Sigmoid colon (tissue), 7 donors: ENCODE measurements at regions of chr11 and their contacts with region 1.

Region 1: GRCh38 chr11:76235233-76236091 is 29.2 kb upstream of the WNT11 start:
- DNase-seq: peak; percentile 95
- H3K4me3 ChIP-seq: peak overlapping the region; percentile 48 to 83 (median 74)
- H3K27ac ChIP-seq: peak overlapping the region; percentile 83 to 90 (median 89)
- H3K4me1 ChIP-seq: peaks cover 0 to 23% (median 17%) of the 10 kb centered on the region in 4 donors
- H3K27me3 ChIP-seq: no peaks in the 10 kb centered on the region
- CTCF ChIP-seq: no peak
- EP300 ChIP-seq: no peak
- POLR2A ChIP-seq: peak in 1 of 2 donors; percentile 33

Region 2: GRCh38 chr11:75826461-75827230 is 408.8 kb before region 1 on chr11:
- intact Hi-C with region 1: loop called (anchors 5 kb)
- DNase-seq: no peak
- H3K4me3 ChIP-seq: no peak overlapping the region
- H3K27ac ChIP-seq: peak overlapping the region; percentile 78 to 92 (median 86)
- H3K4me1 ChIP-seq: peaks cover 0 to 94% (median 70%) of the 10 kb centered on the region in 4 donors
- H3K27me3 ChIP-seq: no peaks in the 10 kb centered on the region
- CTCF ChIP-seq: no peak
- EP300 ChIP-seq: no peak
- POLR2A ChIP-seq: no peak

Region 3: DNA sequence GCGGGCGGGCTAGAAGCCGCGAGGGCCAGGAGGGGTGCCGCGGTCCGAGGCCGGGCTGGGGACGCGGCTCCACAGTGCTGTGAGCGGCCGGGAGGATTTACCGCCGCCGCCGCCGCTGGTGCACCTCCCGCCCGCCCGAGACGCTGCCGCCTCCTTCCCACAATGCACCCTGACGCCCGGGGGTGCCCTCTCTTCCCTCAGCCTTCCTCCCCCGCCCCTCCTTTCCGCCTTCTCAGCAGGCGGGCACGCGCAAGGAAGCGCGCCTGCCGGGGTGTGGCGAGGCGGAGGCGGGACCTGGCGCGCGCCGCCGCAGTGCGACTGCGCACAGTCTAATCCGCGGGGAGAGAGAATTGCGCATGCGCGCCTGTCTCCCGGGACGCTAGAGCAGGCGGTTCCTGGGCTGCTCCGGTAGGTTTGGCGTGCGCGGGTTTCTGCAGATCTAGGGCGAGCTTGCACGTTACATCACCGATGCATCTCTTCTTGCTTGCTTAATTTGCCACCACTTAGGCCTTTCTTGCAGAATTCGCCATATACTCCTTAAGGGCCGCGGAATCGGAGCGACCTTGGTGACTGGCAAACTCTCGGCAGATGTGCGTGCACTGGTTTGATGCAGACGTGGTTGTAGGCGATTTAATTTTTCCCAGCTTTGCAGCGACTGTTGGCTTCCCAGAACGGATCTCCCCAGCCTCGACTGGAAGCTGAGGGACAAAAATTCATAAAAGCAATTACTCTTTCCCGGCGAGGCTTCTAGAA is 145.7 kb after region 1 on chr11 and contains the starts of genes GVQW3 and THAP12:
- intact Hi-C with region 1: loop called (anchors 2 kb)
- DNase-seq: peak; percentile 99
- H3K4me3 ChIP-seq: peak within 1 kb of the TSS; percentile 69 to 92 (median 86)
- H3K27ac ChIP-seq: peak within 1 kb of the TSS; percentile 82 to 86 (median 86)
- H3K4me1 ChIP-seq: peaks cover 0 to 43% (median 28%) of the 10 kb centered on the region in 4 donors
- H3K27me3 ChIP-seq: no peaks in the 10 kb centered on the region
- CTCF ChIP-seq: no peak
- EP300 ChIP-seq: peak in 1 of 4 donors; percentile 25
- POLR2A ChIP-seq: peak in 1 of 2 donors; percentile 23
- total RNA-seq, gene GVQW3: 0.41 to 4.7 (median 2.2) TPM
- total RNA-seq, gene THAP12: 27.7 to 35.0 (median 31.4) TPM